AG04450 (cell line): ENCODE measurements at regions of chr2 and their contacts with region 1.

Region 1: GRCh38 chr2:171703574-171704347 is 16.5 kb downstream of the DYNC1I2 start:
- DNase-seq: no peak
- H3K4me3 ChIP-seq: no peak overlapping the region
- H3K27ac ChIP-seq: no peak overlapping the region
- H3K27me3 ChIP-seq: no peaks in the 10 kb centered on the region
- CTCF ChIP-seq: peak; percentile 65

Region 2: GRCh38 chr2:171598713-171599319 is 104.9 kb before region 1 on chr2:
- CTCF ChIA-PET with region 1: interaction called, 10 read pairs
- POLR2A ChIA-PET with region 1: no interaction called
- DNase-seq: peak; percentile 34
- H3K4me3 ChIP-seq: no peak overlapping the region
- H3K27ac ChIP-seq: no peak overlapping the region
- H3K27me3 ChIP-seq: peaks cover 2% of the 10 kb centered on the region
- CTCF ChIP-seq: peak; percentile 89

Region 3: DNA sequence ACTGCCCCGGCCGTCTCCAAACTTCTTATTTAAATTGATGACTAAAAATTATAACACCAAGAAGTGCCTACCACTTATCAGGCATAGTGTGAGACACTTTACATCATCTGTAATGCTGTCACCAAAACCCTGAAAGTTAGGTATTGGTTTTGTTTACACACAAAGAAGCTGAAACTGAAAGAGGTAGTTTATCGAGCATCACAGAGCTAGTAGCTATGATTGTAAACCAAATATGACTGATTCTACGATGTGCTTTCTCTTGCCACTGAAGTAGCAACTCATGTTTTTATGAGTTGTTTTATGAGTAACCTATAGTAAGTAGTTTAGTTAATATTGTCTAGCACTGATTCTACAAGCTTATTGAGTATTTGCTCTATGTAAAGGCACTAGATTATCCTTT is 15.0 kb after region 1 on chr2:
- CTCF ChIA-PET with region 1: interaction called, 14 read pairs
- POLR2A ChIA-PET with region 1: no interaction called
- DNase-seq: no peak
- H3K4me3 ChIP-seq: no peak overlapping the region
- H3K27ac ChIP-seq: no peak overlapping the region
- H3K27me3 ChIP-seq: no peaks in the 10 kb centered on the region
- CTCF ChIP-seq: no peak

Region 4: GRCh38 chr2:171741189-171741588 is 37.4 kb after region 1 on chr2:
- CTCF ChIA-PET with region 1: no interaction called
- POLR2A ChIA-PET with region 1: no interaction called
- DNase-seq: no peak
- H3K4me3 ChIP-seq: no peak overlapping the region
- H3K27ac ChIP-seq: no peak overlapping the region
- H3K27me3 ChIP-seq: no peaks in the 10 kb centered on the region
- CTCF ChIP-seq: no peak

Region 5: DNA sequence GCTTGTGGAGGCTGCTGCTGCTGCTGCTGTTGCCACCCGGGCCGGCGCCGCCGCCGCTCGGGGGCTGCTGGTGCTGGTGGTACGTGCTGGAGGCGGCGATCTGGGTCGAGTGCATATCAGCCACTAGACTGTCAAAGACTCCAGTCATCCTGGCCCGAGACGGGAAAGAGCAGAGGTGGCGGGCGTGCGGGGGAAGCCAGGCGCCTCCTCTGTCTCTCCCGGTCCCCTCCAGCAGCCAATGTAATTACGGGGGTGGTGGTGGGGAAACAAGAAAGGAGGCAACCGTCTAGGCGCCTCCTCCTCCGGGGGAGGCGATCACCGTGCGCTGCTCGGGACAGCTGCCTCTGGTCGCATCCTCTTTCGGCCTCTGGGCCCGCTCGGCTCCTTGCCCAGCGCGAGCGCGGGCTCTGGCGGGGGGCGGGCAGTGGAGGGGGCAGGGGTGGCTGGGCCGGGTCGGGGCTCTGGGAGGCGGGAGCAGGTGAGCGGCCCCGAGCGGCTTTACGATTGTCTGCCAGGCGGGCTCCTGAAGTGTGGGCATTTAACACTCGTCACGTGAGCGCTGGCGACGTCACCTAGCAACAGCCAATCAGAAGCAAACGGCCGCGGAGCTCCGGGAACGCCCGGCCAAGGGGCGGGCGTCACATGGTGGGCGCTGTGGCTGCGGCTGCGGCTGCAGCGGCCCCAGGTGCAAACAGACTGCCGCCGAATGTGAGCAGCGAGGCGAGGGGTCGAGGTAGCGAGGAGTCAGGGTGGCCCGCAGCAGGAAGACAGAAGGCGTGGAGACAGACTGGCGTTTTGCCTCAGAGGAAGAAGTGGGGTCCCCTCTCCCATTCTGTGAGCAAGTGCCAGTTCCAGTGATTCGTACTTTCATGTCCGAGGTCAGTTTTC is 398.9 kb after region 1 on chr2 and contains the start of gene DLX2:
- CTCF ChIA-PET with region 1: interaction called, 137 read pairs
- POLR2A ChIA-PET with region 1: no interaction called
- DNase-seq: peak; percentile 57
- H3K4me3 ChIP-seq: peak within 1 kb of the TSS; percentile 76
- H3K27ac ChIP-seq: no peak within 1 kb of the TSS
- H3K27me3 ChIP-seq: peaks cover 2% of the 10 kb centered on the region
- CTCF ChIP-seq: no peak
- polyA plus RNA-seq, gene DLX2: 0.10 and 0.24 TPM in 2 replicates

Region 6: GRCh38 chr2:172131713-172132555 is 428.2 kb after region 1 on chr2:
- CTCF ChIA-PET with region 1: interaction called, 42 read pairs
- POLR2A ChIA-PET with region 1: no interaction called
- DNase-seq: no peak
- H3K4me3 ChIP-seq: no peak overlapping the region
- H3K27ac ChIP-seq: no peak overlapping the region
- H3K27me3 ChIP-seq: peaks cover 3% of the 10 kb centered on the region
- CTCF ChIP-seq: no peak

Region 7: GRCh38 chr2:172416447-172417058 is 712.8 kb after region 1 on chr2:
- CTCF ChIA-PET with region 1: no interaction called
- POLR2A ChIA-PET with region 1: no interaction called
- DNase-seq: no peak
- H3K4me3 ChIP-seq: no peak overlapping the region
- H3K27ac ChIP-seq: no peak overlapping the region
- H3K27me3 ChIP-seq: no peaks in the 10 kb centered on the region
- CTCF ChIP-seq: no peak